ENCODE measurements at regions of chr18 and their contacts with region 1.

Region 1: DNA sequence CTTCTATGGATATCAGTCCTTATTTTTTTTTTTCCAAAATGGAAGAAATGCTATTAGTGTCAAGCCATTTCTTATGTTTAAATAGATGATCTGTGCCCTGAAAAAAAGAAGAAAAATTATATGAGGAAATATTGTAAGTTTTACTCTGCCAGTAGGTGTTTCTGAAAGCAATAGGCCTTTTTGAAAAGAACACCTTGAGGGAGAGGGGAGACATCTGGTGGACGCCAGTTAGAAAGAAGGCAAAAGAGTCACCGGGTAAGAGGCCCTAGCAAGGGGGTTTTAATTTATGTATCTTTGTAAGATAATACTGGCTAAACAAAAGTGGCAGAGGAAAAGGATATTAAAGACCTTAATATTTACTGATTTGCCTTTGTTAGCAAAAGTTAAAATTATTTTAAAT is 56.1 kb downstream of the DYNAP start:
- DNase-seq: peak; percentile 37
- H3K4me3 ChIP-seq: no peak overlapping the region
- H3K27ac ChIP-seq: no peak overlapping the region
- H3K4me1 ChIP-seq: no peaks in the 10 kb centered on the region
- H3K27me3 ChIP-seq: peaks cover 6% of the 10 kb centered on the region
- CTCF ChIP-seq: peak; percentile 32 to 81

Region 2: GRCh38 chr18:54392543-54393023 is 254.6 kb before region 1 on chr18:
- CTCF ChIA-PET with region 1: no interaction called
- dilution Hi-C with region 1: no loop called
- in situ Hi-C with region 1: no loop called
- intact Hi-C with region 1: loop called (anchors 1 kb)
- DNase-seq: peak; percentile 44
- H3K4me3 ChIP-seq: no peak overlapping the region
- H3K27ac ChIP-seq: no peak overlapping the region
- H3K4me1 ChIP-seq: peaks cover 16% of the 10 kb centered on the region
- H3K27me3 ChIP-seq: peaks cover 2% of the 10 kb centered on the region
- CTCF ChIP-seq: peak; percentile 68 to 72

Region 3: DNA sequence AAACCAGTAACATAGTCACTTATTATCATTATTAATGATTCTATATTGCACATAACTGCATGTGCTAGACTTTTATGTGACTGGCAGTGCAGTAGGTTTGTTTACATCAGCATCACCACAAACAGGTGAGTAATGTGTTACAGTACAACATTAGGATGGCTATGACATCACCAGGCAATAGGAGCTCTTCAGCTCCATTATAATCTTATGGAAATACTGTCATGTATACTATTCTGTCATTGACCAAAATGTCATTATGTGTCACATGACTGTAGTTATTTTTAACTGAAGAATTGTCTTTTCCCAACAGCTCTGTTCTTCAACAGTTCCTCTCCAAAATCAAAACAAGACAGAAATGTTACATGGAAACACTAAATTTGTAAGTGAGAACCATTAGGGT is 193.2 kb before region 1 on chr18:
- CTCF ChIA-PET with region 1: no interaction called
- dilution Hi-C with region 1: no loop called
- in situ Hi-C with region 1: loop called (anchors 10 to 25 kb)
- intact Hi-C with region 1: no loop called
- DNase-seq: no peak
- H3K4me3 ChIP-seq: no peak overlapping the region
- H3K27ac ChIP-seq: no peak overlapping the region
- H3K4me1 ChIP-seq: no peaks in the 10 kb centered on the region
- H3K27me3 ChIP-seq: peaks cover 5% of the 10 kb centered on the region
- CTCF ChIP-seq: no peak

Region 4: GRCh38 chr18:54466248-54467005 is 180.7 kb before region 1 on chr18:
- CTCF ChIA-PET with region 1: no interaction called
- dilution Hi-C with region 1: no loop called
- in situ Hi-C with region 1: loop called in 1 of 2 experiments (anchors 25 kb)
- intact Hi-C with region 1: no loop called
- DNase-seq: no peak
- H3K4me3 ChIP-seq: no peak overlapping the region
- H3K27ac ChIP-seq: no peak overlapping the region
- H3K4me1 ChIP-seq: no peaks in the 10 kb centered on the region
- H3K27me3 ChIP-seq: no peaks in the 10 kb centered on the region
- CTCF ChIP-seq: no peak

Region 5: GRCh38 chr18:54558609-54559585 is 88.3 kb before region 1 on chr18:
- CTCF ChIA-PET with region 1: no interaction called
- dilution Hi-C with region 1: no loop called
- in situ Hi-C with region 1: loop called in 1 of 2 experiments (anchors 25 kb)
- intact Hi-C with region 1: loop called (anchors 1 kb)
- DNase-seq: peak; percentile 4
- H3K4me3 ChIP-seq: no peak overlapping the region
- H3K27ac ChIP-seq: no peak overlapping the region
- H3K4me1 ChIP-seq: no peaks in the 10 kb centered on the region
- H3K27me3 ChIP-seq: no peaks in the 10 kb centered on the region
- CTCF ChIP-seq: peak; percentile 73 to 76

Measured in mammary epithelial cell (primary cell).